Right ventricle myocardium inferior (tissue), 1 donor: ENCODE measurements at regions of chr5 and their contacts with region 1.

Region 1: GRCh38 chr5:154801083-154801482 is 45.9 kb downstream of the LARP1 start:
- DNase-seq: no peak
- ATAC-seq: no peak

Region 2: GRCh38 chr5:154683101-154683880 is 117.8 kb before region 1 on chr5:
- intact Hi-C with region 1: loop called (anchors 5 kb)
- DNase-seq: no peak
- ATAC-seq: peak; percentile 3

Region 3: GRCh38 chr5:154818471-154819116 is 17.5 kb after region 1 on chr5:
- intact Hi-C with region 1: no loop called
- DNase-seq: peak; percentile 52
- ATAC-seq: no peak